ENCODE measurements at regions of chr15 and their contacts with region 1.

Region 1: DNA sequence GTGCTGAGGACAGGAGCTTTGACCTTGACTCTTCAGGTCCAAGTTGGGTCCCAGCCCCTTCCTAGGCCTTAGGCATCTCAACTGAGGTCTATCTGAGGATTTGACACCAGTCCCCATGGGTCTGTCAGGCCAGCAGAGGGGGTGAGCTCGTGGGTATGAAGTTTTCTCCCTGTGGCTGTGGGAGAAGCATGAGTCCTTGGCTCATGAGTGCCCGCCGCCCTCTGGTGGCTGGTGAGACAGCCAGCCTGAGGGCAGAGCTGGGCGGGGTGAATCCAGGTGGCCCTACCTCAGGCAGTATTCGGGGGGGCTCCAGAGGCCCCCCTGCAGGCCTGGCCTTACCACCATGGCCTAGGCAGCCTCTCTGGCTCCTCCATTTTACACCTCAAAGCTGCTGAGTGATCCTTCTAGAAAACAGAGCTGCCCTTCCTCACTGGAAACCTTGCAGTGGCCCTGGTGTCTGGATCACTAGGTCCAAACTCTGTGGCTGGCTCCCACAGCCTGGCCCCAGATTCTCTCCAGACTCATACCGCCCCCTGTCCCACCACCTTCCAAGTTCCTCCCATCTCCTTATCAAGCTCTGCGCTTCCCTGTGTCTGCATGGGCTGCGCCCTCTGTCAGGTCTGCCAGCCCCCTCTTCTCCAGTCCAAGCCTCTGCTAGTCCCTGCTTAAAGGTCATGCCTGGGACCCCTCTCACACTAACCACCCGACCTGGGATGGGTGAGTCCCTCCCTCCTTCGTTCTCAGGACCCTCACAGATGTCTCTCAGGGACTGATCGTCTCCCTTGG is 16.1 kb downstream of the SH2D7 start:
- DNase-seq: peak; percentile 92
- ATAC-seq: peak; percentile 71
- H3K4me3 Mint-ChIP-seq: no peak overlapping the region
- H3K27ac Mint-ChIP-seq: no peak overlapping the region
- H3K4me1 Mint-ChIP-seq: peaks cover 56% of the 10 kb centered on the region
- H3K27me3 Mint-ChIP-seq: no peaks in the 10 kb centered on the region

Region 2: DNA sequence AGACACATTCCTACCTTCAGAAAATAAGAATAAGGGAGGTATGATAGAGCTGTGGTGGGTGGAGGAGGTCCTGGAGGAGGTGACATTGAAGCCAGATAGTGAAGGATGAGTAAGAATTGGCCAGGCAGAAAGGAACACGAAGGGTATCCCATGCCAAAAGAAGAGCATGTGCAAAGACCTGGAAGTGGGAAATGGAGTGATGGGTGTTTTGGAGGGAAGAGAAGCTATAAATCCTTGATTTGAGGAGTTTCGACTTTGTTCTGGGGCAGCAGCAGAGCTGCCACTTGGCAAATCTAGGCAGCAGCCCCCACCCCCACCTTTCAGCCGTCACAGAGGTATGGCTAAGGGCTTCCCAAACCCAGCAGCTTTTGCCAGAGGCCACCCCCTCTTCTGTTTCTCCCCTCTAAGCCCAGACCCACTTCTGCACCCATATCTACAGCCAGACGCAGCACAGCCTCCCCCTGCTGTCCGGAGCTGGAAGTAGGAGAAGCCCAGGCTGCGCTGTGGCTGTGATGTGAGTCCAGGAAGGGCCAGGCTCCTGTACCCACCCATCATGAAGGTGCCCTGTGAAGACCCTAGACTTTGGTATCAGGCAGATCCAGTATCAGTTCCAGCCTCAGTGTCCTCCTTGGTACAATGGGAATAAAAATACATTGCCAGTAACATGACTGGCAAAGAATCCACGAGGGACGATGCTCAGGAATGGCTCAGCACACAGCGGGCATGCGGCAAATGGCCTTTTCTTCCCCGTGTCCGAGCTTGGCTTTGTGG is 287.1 kb before region 1 on chr15:
- CTCF ChIA-PET with region 1: no interaction called
- DNase-seq: peak; percentile 61
- ATAC-seq: peak; percentile 57
- H3K4me3 Mint-ChIP-seq: no peak overlapping the region
- H3K27ac Mint-ChIP-seq: no peak overlapping the region
- H3K4me1 Mint-ChIP-seq: peaks cover 2% of the 10 kb centered on the region
- H3K27me3 Mint-ChIP-seq: peaks cover 45% of the 10 kb centered on the region

Region 3: GRCh38 chr15:77966540-77967290 is 141.8 kb before region 1 on chr15:
- CTCF ChIA-PET with region 1: interaction called, 180 read pairs
- DNase-seq: peak; percentile 63
- ATAC-seq: peak; percentile 75
- H3K4me3 Mint-ChIP-seq: no peak overlapping the region
- H3K27ac Mint-ChIP-seq: no peak overlapping the region
- H3K4me1 Mint-ChIP-seq: peaks cover 20% of the 10 kb centered on the region
- H3K27me3 Mint-ChIP-seq: peaks cover 25% of the 10 kb centered on the region

Region 4: DNA sequence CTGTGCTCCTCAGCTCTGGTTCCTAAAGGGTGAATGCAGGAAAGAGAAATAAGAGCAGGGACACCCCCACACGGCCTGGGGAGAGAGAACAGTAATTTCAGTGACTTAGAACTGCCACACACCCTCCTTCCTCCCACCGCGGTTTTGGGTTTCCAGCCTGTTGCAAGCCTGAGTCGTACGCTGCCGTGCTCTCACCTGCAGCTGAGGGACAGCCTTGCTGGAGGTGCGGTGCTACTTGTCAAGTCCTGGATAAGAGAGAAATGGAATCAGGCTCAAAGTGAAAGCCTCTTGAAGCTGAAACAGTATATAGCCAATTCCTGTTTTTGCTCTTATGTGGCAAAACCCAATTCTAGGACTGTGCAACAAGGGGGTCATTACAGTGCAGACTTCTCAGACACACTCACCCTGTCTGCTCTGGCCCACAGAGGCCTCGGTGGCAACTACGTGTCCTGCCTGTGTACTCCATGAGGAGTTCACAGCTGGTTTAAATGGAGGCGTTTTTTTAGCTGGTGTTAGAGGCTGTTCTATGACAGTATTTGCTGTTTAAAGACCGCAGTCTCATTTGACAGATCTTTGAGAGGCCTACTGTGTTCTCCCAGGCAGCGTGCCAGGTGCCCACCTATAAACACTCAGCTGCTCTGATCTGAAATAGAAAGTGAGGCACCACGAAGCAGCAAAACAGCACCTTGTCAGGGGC is 73.8 kb before region 1 on chr15:
- CTCF ChIA-PET with region 1: interaction called, 60 read pairs
- DNase-seq: peak; percentile 95
- ATAC-seq: peak; percentile 80
- H3K4me3 Mint-ChIP-seq: peak overlapping the region; percentile 46
- H3K27ac Mint-ChIP-seq: peak overlapping the region; percentile 92
- H3K4me1 Mint-ChIP-seq: peaks cover 92% of the 10 kb centered on the region
- H3K27me3 Mint-ChIP-seq: no peaks in the 10 kb centered on the region

Region 5: GRCh38 chr15:78061963-78062435 is 46.5 kb before region 1 on chr15:
- CTCF ChIA-PET with region 1: interaction called, 251 read pairs
- DNase-seq: peak; percentile 71
- ATAC-seq: peak; percentile 79
- H3K4me3 Mint-ChIP-seq: peak overlapping the region; percentile 64
- H3K27ac Mint-ChIP-seq: peak overlapping the region; percentile 91
- H3K4me1 Mint-ChIP-seq: peaks cover 41% of the 10 kb centered on the region
- H3K27me3 Mint-ChIP-seq: no peaks in the 10 kb centered on the region

Region 6: DNA sequence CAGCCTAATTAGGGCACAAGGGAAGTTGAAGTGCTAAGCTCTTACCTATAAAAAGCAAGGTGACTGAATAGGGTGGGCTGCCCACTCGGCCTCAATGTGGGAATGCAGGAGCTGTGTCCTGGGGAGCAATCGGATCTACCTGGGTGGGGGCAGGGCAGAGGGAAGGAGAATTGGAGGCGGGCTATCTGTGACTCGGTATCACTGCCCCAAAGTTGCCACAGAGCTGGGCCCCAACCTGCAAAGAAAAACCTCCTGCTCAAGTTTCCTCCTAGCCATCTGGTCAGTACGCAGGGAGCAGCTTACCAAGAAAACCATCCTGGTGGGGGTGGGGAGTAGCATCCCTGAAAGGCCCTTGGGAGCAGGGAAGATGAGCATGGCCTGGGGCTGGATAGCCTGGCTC is 12.0 kb after region 1 on chr15:
- CTCF ChIA-PET with region 1: interaction called, 11 read pairs
- DNase-seq: no peak
- ATAC-seq: no peak
- H3K4me3 Mint-ChIP-seq: no peak overlapping the region
- H3K27ac Mint-ChIP-seq: no peak overlapping the region
- H3K4me1 Mint-ChIP-seq: peaks cover 3% of the 10 kb centered on the region
- H3K27me3 Mint-ChIP-seq: peaks cover 4% of the 10 kb centered on the region

Region 7: DNA sequence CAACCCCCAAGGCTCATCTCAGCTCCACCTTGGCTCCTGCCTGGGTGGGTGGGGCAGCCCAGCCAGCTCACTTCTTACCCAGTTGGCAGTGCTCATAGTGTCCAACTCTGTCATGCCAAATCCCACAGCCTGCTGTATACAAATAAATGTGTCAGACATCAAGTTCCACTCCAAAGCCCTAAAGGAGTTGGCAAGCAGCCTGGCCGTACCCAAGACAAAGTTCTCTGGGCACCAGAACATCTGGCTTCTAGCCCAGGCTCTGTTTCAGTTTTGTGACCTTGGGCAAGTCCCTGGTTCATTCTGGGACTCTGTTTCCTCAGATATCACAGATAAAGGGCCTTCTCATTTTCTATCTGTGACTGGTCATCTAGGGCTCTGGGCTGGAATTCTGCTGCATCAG is 108.2 kb after region 1 on chr15:
- CTCF ChIA-PET with region 1: no interaction called
- DNase-seq: no peak
- ATAC-seq: no peak
- H3K4me3 Mint-ChIP-seq: no peak overlapping the region
- H3K27ac Mint-ChIP-seq: no peak overlapping the region
- H3K4me1 Mint-ChIP-seq: no peaks in the 10 kb centered on the region
- H3K27me3 Mint-ChIP-seq: peaks cover 21% of the 10 kb centered on the region

Region 8: GRCh38 chr15:78241007-78241406 is 132.5 kb after region 1 on chr15:
- CTCF ChIA-PET with region 1: interaction called, 101 read pairs
- DNase-seq: peak; percentile 90
- ATAC-seq: peak; percentile 95
- H3K4me3 Mint-ChIP-seq: no peak overlapping the region
- H3K27ac Mint-ChIP-seq: no peak overlapping the region
- H3K4me1 Mint-ChIP-seq: peaks cover 3% of the 10 kb centered on the region
- H3K27me3 Mint-ChIP-seq: peaks cover 16% of the 10 kb centered on the region